OCI-LY7 (cell line): ENCODE measurements at regions of chr12 and their contacts with region 1.

Region 1: DNA sequence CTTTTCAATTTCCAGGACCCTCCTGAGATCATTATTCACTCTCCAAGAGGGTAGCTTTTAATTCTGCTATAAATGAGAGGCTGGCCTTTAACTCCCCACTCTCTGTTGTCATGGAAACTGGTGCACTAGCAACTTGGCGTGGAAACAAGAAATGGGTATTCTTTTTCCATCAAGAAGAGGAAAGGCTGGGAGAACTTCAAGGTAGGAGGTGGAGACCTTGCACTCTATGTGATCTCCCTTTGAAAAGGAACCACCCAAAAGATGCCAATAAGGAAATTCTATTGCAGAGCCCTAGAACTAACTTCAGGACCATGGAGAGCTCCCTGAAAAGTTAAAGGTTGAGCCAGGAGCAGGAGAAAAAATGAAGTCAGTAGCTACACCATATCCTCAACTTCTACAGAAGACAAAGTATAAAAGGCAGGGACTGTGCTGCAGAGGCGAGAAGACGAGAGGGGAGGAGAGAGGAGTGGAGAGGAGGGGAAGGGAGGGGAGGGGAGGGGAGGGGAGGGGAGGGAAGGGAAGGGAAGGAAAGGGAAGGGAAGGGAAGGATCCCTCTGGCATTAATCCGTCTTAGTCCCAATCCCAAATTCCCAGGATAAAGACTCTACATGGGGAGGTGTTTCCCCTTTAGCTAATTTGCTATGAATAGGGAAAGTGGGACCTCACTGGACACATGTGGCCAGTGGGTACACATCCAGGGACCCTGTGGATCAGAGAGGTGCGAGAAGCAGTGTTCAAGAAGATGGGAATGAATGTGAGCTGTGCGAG is 46.7 kb upstream of the FICD start:
- DNase-seq: peak; percentile 51
- H3K4me3 ChIP-seq: no peak overlapping the region
- H3K27ac ChIP-seq: no peak overlapping the region
- H3K4me1 ChIP-seq: no peaks in the 10 kb centered on the region
- CTCF ChIP-seq: no peak

Region 2: DNA sequence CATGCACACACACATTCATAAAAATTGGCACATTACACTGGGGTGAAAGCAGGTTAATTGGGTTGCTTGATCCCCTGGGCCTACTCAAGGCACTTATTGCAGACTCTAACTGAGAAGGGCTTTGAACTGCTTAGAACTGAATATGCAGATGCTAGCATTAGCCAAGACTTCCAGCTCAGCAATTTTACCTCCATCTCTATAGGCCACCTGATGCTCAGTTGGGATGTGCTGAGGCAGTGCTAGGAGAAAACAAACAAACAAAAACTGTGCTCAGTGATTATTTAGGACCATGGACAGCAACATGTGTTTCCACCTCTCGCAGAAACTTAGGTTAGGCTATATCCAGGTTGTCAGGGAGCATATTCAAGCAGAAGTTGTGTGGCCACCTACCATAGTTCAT is 464.1 kb before region 1 on chr12:
- CTCF ChIA-PET with region 1: no interaction called
- POLR2A ChIA-PET with region 1: no interaction called
- intact Hi-C with region 1: loop called (anchors 10 kb)
- DNase-seq: peak; percentile 3
- H3K4me3 ChIP-seq: no peak overlapping the region
- H3K27ac ChIP-seq: no peak overlapping the region
- H3K4me1 ChIP-seq: no peaks in the 10 kb centered on the region
- CTCF ChIP-seq: no peak